ENCODE measurements at regions of chr9 and their contacts with region 1.

Region 1: GRCh38 chr9:127943731-127944144 is 6.1 kb upstream of the DPM2 start:
- DNase-seq: peak; percentile 84 to 89 (median 87)
- H3K4me3 ChIP-seq: no peak overlapping the region
- H3K27ac ChIP-seq: no peak overlapping the region
- H3K4me1 ChIP-seq: peaks cover 2% of the 10 kb centered on the region
- H3K27me3 ChIP-seq: no peaks in the 10 kb centered on the region
- CTCF ChIP-seq: peak; percentile 71 to 91 (median 87)
- EP300 ChIP-seq: no peak
- POLR2A ChIP-seq: no peak

Region 2: GRCh38 chr9:127828262-127829031 is 115.3 kb before region 1 on chr9:
- intact Hi-C with region 1: no loop called
- DNase-seq: peak; percentile 96 to 98 (median 97)
- H3K4me3 ChIP-seq: peak overlapping the region; percentile 32
- H3K27ac ChIP-seq: peak overlapping the region; percentile 82 to 96
- H3K4me1 ChIP-seq: peaks cover 38% of the 10 kb centered on the region
- H3K27me3 ChIP-seq: no peaks in the 10 kb centered on the region
- CTCF ChIP-seq: peak in 1 of 3 donors; percentile 21
- EP300 ChIP-seq: no peak
- POLR2A ChIP-seq: peak; percentile 78

Region 3: DNA sequence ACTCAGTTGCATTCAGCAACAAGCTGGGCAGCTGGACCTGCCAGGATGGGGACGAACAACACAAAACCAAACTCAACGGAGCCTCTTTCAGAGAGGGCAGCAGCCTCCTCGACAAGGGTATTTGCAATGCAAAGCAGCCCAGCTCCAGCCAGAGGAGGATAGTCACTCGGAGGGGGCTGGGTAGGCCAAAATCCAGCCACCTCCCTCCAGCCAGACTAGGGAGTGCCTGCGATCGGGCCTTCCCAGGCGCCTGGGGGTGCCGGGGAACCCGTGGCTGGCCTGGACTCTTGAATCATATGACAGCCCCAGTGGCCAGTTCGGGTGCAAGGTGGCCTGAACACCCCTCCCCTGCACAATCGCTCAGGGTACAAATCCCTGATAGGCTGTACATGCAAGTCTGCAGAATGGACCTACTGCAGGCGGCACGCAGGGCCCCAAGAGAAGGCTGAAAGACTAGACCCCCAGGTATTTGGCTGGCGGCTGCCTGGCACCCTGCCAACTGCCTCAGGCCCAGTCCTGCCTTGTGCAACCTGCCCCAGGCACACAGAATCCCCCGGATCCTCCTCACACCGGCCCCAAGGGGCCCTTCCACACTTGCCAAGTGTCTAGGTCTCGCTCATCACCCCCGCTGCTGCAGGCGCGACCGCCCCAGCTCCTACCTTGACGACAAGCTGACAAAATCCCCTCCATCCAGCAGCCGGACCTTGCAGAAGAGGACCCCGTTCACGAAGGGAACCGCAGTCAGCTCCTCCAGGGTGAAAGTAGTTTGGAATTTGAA is 35.8 kb after region 1 on chr9:
- intact Hi-C with region 1: loop called in 1 of 4 experiments (anchors 5 kb)
- DNase-seq: peak; percentile 54 to 77 (median 72)
- H3K4me3 ChIP-seq: peak overlapping the region; percentile 89
- H3K27ac ChIP-seq: peak overlapping the region; percentile 60 to 74
- H3K4me1 ChIP-seq: peaks cover 33% of the 10 kb centered on the region
- H3K27me3 ChIP-seq: no peaks in the 10 kb centered on the region
- CTCF ChIP-seq: no peak
- EP300 ChIP-seq: no peak
- POLR2A ChIP-seq: no peak

Region 4: DNA sequence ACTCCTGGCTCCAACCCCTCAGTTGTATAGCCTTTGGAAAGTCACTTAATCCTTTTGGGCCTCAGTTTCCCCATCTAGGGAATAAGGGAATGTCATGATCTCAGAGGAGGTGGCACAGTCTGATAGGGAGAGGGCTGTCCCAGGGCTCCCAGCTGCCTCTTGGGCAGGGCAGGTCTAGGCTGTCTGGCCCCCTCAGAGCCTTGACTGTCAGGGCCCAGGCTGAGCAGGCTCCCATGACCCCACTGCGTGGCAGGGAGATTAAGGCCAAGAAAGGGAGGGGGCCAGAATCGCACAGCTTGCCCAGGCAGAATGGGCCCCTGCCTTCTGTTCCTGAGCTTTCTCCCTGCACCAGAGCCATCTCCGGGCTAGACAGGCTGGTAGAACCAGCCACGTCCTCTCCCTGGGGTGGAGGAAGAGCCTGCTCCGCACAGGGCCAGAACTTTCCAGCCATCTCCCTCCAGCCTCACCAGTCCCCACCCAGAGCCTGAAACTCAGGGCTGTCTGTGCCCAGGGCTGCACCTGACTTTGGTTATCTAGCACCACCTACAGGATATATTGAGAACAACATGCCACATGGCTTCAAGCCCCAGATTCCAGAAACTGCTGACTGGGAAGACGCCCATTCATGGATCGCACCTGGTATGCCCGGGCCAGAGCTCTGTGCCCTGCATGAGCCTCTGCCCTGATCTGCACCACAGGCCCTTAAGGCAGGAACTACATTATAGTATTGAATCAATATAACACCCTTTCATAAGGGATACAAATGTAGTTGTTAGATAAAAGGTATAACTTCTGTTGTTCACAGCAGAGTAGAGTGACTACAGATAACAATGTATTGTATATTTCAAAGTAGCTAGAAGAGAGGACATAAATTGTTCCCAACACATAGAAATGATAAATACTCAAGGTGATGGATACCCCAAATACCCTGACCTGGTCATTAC is 91.4 kb after region 1 on chr9:
- intact Hi-C with region 1: loop called (anchors 2 to 5 kb)
- DNase-seq: peak; percentile 67 to 78 (median 69)
- H3K4me3 ChIP-seq: no peak overlapping the region
- H3K27ac ChIP-seq: no peak overlapping the region
- H3K4me1 ChIP-seq: no peaks in the 10 kb centered on the region
- H3K27me3 ChIP-seq: no peaks in the 10 kb centered on the region
- CTCF ChIP-seq: peak; percentile 80 to 94 (median 91)
- EP300 ChIP-seq: no peak
- POLR2A ChIP-seq: peak; percentile 25

Region 5: DNA sequence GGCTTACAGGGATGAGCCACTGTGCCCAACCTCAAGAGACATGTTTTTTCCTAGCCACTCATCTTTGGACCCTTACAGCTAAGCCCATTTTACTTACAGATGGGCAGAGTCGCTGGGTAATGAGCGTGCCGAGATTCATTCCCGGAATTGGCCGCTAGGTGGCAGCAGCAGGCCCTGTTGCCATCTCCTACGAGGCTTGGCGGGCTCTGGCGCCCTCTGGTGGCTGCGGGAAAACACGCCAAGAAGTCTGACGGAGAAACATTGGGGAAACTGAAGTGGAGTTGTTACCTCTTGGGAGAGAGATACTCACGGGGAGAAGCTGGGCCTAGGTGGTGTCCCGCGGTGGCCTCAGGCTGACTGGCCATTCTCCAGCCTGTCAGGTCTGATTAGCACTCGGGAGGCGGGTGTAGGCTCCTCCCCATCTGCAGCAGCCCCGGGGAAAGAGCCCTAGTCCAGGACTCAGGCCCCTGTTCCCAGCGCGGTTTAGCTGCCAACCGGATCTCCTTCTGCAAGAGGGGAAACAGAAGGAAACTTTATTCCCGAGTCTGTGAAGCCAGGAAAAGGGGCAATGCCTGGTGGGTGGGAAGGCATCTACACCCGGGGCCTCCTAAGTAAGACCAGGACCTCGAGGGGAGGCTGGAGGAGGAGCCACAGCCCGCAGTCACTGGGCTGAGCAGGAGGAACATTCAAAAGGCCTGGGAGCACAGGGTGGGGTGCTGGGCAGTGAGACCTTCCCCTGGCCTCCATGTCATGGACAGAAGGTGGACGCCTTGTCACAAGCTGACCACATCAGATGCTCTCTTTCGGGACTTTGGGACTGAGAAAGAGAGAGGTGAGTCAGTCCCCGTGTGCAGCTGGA is 174.1 kb after region 1 on chr9:
- intact Hi-C with region 1: loop called (anchors 1 to 5 kb)
- DNase-seq: peak; percentile 91 to 98 (median 98)
- H3K4me3 ChIP-seq: no peak overlapping the region
- H3K27ac ChIP-seq: no peak overlapping the region
- H3K4me1 ChIP-seq: peaks cover 4% of the 10 kb centered on the region
- H3K27me3 ChIP-seq: no peaks in the 10 kb centered on the region
- CTCF ChIP-seq: peak; percentile 100
- EP300 ChIP-seq: no peak
- POLR2A ChIP-seq: peak; percentile 45

Region 6: GRCh38 chr9:128191406-128192046 is 247.8 kb after region 1 on chr9 and contains the start of gene CIZ1:
- intact Hi-C with region 1: no loop called
- DNase-seq: peak; percentile 74 to 88 (median 81)
- H3K4me3 ChIP-seq: peak within 1 kb of the TSS; percentile 78
- H3K27ac ChIP-seq: peak within 1 kb of the TSS; percentile 68 to 81
- H3K4me1 ChIP-seq: peaks cover 6% of the 10 kb centered on the region
- H3K27me3 ChIP-seq: no peaks in the 10 kb centered on the region
- CTCF ChIP-seq: peak; percentile 79 to 92 (median 86)
- EP300 ChIP-seq: no peak
- POLR2A ChIP-seq: peak; percentile 52
- total RNA-seq, gene CIZ1: 53.1 to 185 (median 153) TPM

Measured in ovary (tissue), 10 donors.